GM12878 (cell line): ENCODE measurements at regions of chr11 and their contacts with region 1.

Region 1: GRCh38 chr11:35822815-35823495 is 120.9 kb upstream of the LDLRAD3 start:
- DNase-seq: no peak
- ATAC-seq: no peak
- H3K4me3 ChIP-seq: no peak overlapping the region
- H3K27ac ChIP-seq: no peak overlapping the region
- H3K4me1 ChIP-seq: no peaks in the 10 kb centered on the region
- H3K27me3 ChIP-seq: no peaks in the 10 kb centered on the region
- CTCF ChIP-seq: no peak
- EP300 ChIP-seq: no peak
- POLR2A ChIP-seq: no peak
- RAD21 ChIP-seq: no peak

Region 2: DNA sequence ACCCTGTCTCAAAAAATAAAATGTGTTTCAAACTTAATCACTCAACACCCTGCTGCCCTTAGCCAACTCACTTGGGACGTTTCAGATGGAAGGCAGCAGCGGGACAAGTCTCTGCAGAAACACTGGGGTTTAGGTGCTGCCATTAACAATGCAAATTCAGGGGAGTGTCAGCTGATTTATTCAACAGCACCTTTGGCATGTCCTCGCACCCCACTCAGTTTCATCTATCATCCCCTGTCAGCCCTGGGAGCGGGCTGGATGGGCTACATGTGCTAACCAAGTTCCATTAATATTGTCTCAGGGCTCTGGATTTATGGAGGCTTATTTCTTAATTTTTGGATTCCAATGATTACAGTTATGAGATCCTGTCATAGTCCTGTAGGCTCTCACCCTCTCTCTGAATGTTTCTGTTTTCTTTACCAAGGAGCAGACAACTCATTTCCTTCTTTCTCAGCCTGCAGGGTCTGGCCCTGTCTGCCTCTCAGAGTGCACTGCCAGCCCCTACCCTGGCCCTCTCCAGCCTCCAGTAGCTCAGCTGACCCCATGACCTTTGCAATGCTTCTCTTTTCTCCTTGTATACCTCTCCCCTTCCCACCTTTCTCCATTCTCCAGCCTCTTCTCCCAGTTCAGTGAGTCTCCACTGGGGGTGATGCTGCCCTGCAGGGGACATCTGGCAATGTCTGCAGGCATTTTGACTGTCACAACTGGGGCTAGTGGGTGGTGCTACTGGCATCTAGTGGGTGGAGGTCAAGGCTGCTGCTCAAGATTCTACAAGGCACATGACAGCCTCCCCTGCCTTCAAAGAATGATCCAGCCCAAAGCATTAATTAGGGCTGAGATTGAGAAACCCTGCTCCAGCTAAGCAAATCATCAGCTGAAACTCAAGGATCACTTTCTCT is 985.7 kb before region 1 on chr11:
- CTCF ChIA-PET with region 1: no interaction called
- POLR2A ChIA-PET with region 1: no interaction called
- RAD21 ChIA-PET with region 1: no interaction called
- SMC1A ChIA-PET with region 1: no interaction called
- in situ Hi-C with region 1: no loop called
- intact Hi-C with region 1: no loop called
- DNase-seq: no peak
- ATAC-seq: no peak
- H3K4me3 ChIP-seq: no peak overlapping the region
- H3K27ac ChIP-seq: no peak overlapping the region
- H3K4me1 ChIP-seq: no peaks in the 10 kb centered on the region
- H3K27me3 ChIP-seq: peaks cover 0 to 1% of the 10 kb centered on the region in 2 experiments; a peak in 2 of 4 replicates
- CTCF ChIP-seq: no peak
- EP300 ChIP-seq: no peak
- POLR2A ChIP-seq: no peak
- RAD21 ChIP-seq: no peak

Region 3: GRCh38 chr11:35165423-35166368 is 657.3 kb before region 1 on chr11:
- CTCF ChIA-PET with region 1: no interaction called
- POLR2A ChIA-PET with region 1: no interaction called
- RAD21 ChIA-PET with region 1: no interaction called
- SMC1A ChIA-PET with region 1: no interaction called
- in situ Hi-C with region 1: no loop called
- intact Hi-C with region 1: no loop called
- DNase-seq: peak; percentile 99
- ATAC-seq: peak; percentile 85
- H3K4me3 ChIP-seq: peak overlapping the region; percentile 53
- H3K27ac ChIP-seq: peak overlapping the region; percentile 72
- H3K4me1 ChIP-seq: peaks cover 54% of the 10 kb centered on the region
- H3K27me3 ChIP-seq: no peaks in the 10 kb centered on the region
- CTCF ChIP-seq: no peak
- EP300 ChIP-seq: peak; percentile 60 to 86; a peak in 3 of 4 replicates
- POLR2A ChIP-seq: peak; percentile 41; the same call in 1 of the 2 replicates
- RAD21 ChIP-seq: no peak

Region 4: GRCh38 chr11:35721651-35722282 is 101.2 kb before region 1 on chr11:
- CTCF ChIA-PET with region 1: interaction called, 13 read pairs
- POLR2A ChIA-PET with region 1: no interaction called
- RAD21 ChIA-PET with region 1: interaction called, 20 read pairs
- SMC1A ChIA-PET with region 1: interaction called, 15 read pairs
- in situ Hi-C with region 1: no loop called
- intact Hi-C with region 1: no loop called
- DNase-seq: no peak
- ATAC-seq: peak; percentile 81
- H3K4me3 ChIP-seq: peak overlapping the region; percentile 24
- H3K27ac ChIP-seq: peak overlapping the region; percentile 65
- H3K4me1 ChIP-seq: peaks cover 33% of the 10 kb centered on the region
- H3K27me3 ChIP-seq: no peaks in the 10 kb centered on the region
- CTCF ChIP-seq: no peak
- EP300 ChIP-seq: peak; percentile 8 to 40; a peak in 1 of 4 replicates
- POLR2A ChIP-seq: no peak
- RAD21 ChIP-seq: no peak

Region 5: GRCh38 chr11:35811775-35812174 is 11.2 kb before region 1 on chr11:
- CTCF ChIA-PET with region 1: interaction called, 52 read pairs
- POLR2A ChIA-PET with region 1: interaction called, 4 read pairs
- RAD21 ChIA-PET with region 1: interaction called, 25 read pairs
- SMC1A ChIA-PET with region 1: interaction called, 20 read pairs
- in situ Hi-C with region 1: no loop called
- intact Hi-C with region 1: no loop called
- DNase-seq: no peak
- ATAC-seq: peak; percentile 84
- H3K4me3 ChIP-seq: no peak overlapping the region
- H3K27ac ChIP-seq: no peak overlapping the region
- H3K4me1 ChIP-seq: no peaks in the 10 kb centered on the region
- H3K27me3 ChIP-seq: no peaks in the 10 kb centered on the region
- CTCF ChIP-seq: peak in 1 of 3 experiments; percentile 10; a peak in 1 of 6 replicates
- EP300 ChIP-seq: no peak
- POLR2A ChIP-seq: no peak
- RAD21 ChIP-seq: no peak

Region 6: DNA sequence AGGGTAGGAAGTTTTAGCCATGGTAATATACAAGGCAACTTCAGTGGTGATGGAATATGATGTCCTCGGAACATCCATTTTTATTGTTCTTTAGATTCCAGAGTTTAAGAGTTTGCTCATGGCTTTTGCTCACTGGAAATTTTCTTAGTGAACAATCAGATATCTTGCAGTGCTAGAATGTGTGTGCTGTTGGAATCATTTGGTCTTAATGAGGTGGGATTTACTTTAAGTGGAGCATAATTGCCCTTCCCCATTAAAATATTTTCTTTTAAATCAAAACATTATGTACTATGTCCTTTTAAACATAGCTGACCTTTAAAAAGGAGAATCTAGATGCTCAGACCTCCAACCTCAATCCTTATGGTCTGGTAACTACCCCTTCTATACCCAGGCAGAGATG is 43.6 kb after region 1 on chr11:
- CTCF ChIA-PET with region 1: no interaction called
- POLR2A ChIA-PET with region 1: no interaction called
- RAD21 ChIA-PET with region 1: no interaction called
- SMC1A ChIA-PET with region 1: no interaction called
- in situ Hi-C with region 1: no loop called
- intact Hi-C with region 1: no loop called
- DNase-seq: no peak
- ATAC-seq: no peak
- H3K4me3 ChIP-seq: no peak overlapping the region
- H3K27ac ChIP-seq: no peak overlapping the region
- H3K4me1 ChIP-seq: no peaks in the 10 kb centered on the region
- H3K27me3 ChIP-seq: no peaks in the 10 kb centered on the region
- CTCF ChIP-seq: no peak
- EP300 ChIP-seq: no peak
- POLR2A ChIP-seq: no peak
- RAD21 ChIP-seq: no peak

Region 7: GRCh38 chr11:35943713-35944655 is 121.0 kb after region 1 on chr11 and contains the start of gene LDLRAD3:
- CTCF ChIA-PET with region 1: interaction called, 3 read pairs
- POLR2A ChIA-PET with region 1: no interaction called
- RAD21 ChIA-PET with region 1: interaction called, 9 read pairs
- SMC1A ChIA-PET with region 1: interaction called, 10 read pairs
- in situ Hi-C with region 1: no loop called
- intact Hi-C with region 1: no loop called
- DNase-seq: no peak
- ATAC-seq: peak; percentile 86
- H3K4me3 ChIP-seq: peak within 1 kb of the TSS; percentile 71; the same call in 1 of the 2 replicates
- H3K27ac ChIP-seq: no peak within 1 kb of the TSS
- H3K4me1 ChIP-seq: peaks cover 5% of the 10 kb centered on the region; the same call in 1 of the 2 replicates
- H3K27me3 ChIP-seq: peaks cover 0 to 10% of the 10 kb centered on the region in 2 experiments; a peak in 1 of 4 replicates
- CTCF ChIP-seq: no peak
- EP300 ChIP-seq: no peak
- POLR2A ChIP-seq: peak; percentile 55; the same call in 1 of the 2 replicates
- RAD21 ChIP-seq: no peak
- polyA plus RNA-seq, gene LDLRAD3: 2.5 to 3.1 TPM

Region 8: GRCh38 chr11:36041988-36042611 is 219.1 kb after region 1 on chr11:
- CTCF ChIA-PET with region 1: interaction called, 20 read pairs
- POLR2A ChIA-PET with region 1: no interaction called
- RAD21 ChIA-PET with region 1: interaction called, 14 read pairs
- SMC1A ChIA-PET with region 1: interaction called, 26 read pairs
- in situ Hi-C with region 1: no loop called
- intact Hi-C with region 1: no loop called
- DNase-seq: no peak
- ATAC-seq: peak; percentile 86
- H3K4me3 ChIP-seq: no peak overlapping the region
- H3K27ac ChIP-seq: no peak overlapping the region
- H3K4me1 ChIP-seq: no peaks in the 10 kb centered on the region
- H3K27me3 ChIP-seq: no peaks in the 10 kb centered on the region; a peak in 1 of 4 replicates
- CTCF ChIP-seq: peak; percentile 48 to 58 (median 51); a peak in 5 of 6 replicates
- EP300 ChIP-seq: no peak
- POLR2A ChIP-seq: no peak
- RAD21 ChIP-seq: peak; percentile 63

Region 9: DNA sequence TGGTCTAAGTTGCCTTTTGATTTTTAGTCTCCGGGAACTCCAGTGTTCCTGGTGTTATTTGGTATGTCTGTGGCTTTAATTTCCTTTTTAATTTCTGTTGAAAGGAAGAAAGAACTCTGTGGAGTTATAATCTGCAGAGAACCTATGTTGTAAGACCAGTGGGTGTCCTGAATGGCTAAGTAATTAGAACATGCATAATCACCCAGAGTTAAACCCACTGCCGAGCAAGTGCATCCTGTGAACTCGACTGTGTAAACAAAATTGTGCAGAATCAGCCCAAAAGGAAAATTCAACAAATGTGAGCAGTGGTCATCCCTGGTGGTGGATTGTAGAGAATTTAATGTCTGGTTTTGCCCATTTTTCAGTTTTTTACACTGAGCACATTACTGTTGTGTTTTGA is 303.7 kb after region 1 on chr11:
- CTCF ChIA-PET with region 1: interaction called, 82 read pairs
- POLR2A ChIA-PET with region 1: interaction called, 4 read pairs
- RAD21 ChIA-PET with region 1: interaction called, 66 read pairs
- SMC1A ChIA-PET with region 1: interaction called, 58 read pairs
- in situ Hi-C with region 1: no loop called
- intact Hi-C with region 1: loop called (anchors 1 kb)
- DNase-seq: no peak
- ATAC-seq: no peak
- H3K4me3 ChIP-seq: no peak overlapping the region
- H3K27ac ChIP-seq: no peak overlapping the region
- H3K4me1 ChIP-seq: no peaks in the 10 kb centered on the region
- H3K27me3 ChIP-seq: peaks cover 0 to 2% of the 10 kb centered on the region in 2 experiments; a peak in 2 of 4 replicates
- CTCF ChIP-seq: no peak
- EP300 ChIP-seq: no peak
- POLR2A ChIP-seq: no peak
- RAD21 ChIP-seq: no peak

Region 10: GRCh38 chr11:36265793-36266628 is 443.1 kb after region 1 on chr11:
- CTCF ChIA-PET with region 1: interaction called, 51 read pairs
- POLR2A ChIA-PET with region 1: no interaction called
- RAD21 ChIA-PET with region 1: interaction called, 22 read pairs
- SMC1A ChIA-PET with region 1: interaction called, 14 read pairs
- in situ Hi-C with region 1: no loop called
- intact Hi-C with region 1: loop called (anchors 5 kb)
- DNase-seq: no peak
- ATAC-seq: peak; percentile 95
- H3K4me3 ChIP-seq: no peak overlapping the region
- H3K27ac ChIP-seq: no peak overlapping the region
- H3K4me1 ChIP-seq: no peaks in the 10 kb centered on the region
- H3K27me3 ChIP-seq: no peaks in the 10 kb centered on the region
- CTCF ChIP-seq: peak; percentile 89 to 93 (median 92)
- EP300 ChIP-seq: no peak
- POLR2A ChIP-seq: no peak
- RAD21 ChIP-seq: peak; percentile 91